GM12878 (cell line): ENCODE measurements at regions of chr9 and their contacts with region 1.

Region 1: GRCh38 chr9:89179895-89180667 is 1.5 kb upstream of the SHC3 start:
- DNase-seq: no peak
- ATAC-seq: peak; percentile 52
- H3K4me3 ChIP-seq: no peak overlapping the region
- H3K27ac ChIP-seq: no peak overlapping the region
- H3K4me1 ChIP-seq: no peaks in the 10 kb centered on the region
- H3K27me3 ChIP-seq: peaks cover 5 to 24% of the 10 kb centered on the region in 2 experiments
- CTCF ChIP-seq: no peak
- EP300 ChIP-seq: no peak
- POLR2A ChIP-seq: no peak
- RAD21 ChIP-seq: no peak

Region 2: GRCh38 chr9:89278997-89279739 is 99.1 kb after region 1 on chr9:
- CTCF ChIA-PET with region 1: interaction called, 4 read pairs
- POLR2A ChIA-PET with region 1: no interaction called
- RAD21 ChIA-PET with region 1: no interaction called
- SMC1A ChIA-PET with region 1: no interaction called
- in situ Hi-C with region 1: no loop called
- intact Hi-C with region 1: loop called (anchors 5 kb)
- DNase-seq: no peak
- ATAC-seq: peak; percentile 74
- H3K4me3 ChIP-seq: no peak overlapping the region
- H3K27ac ChIP-seq: no peak overlapping the region
- H3K4me1 ChIP-seq: peaks cover 3% of the 10 kb centered on the region; the same call in 1 of the 2 replicates
- H3K27me3 ChIP-seq: no peaks in the 10 kb centered on the region
- CTCF ChIP-seq: peak; percentile 62 to 72 (median 67)
- EP300 ChIP-seq: no peak
- POLR2A ChIP-seq: no peak
- RAD21 ChIP-seq: peak; percentile 81